CD14-positive monocyte (primary cell): ENCODE measurements at regions of chr15 and their contacts with region 1.

Region 1: DNA sequence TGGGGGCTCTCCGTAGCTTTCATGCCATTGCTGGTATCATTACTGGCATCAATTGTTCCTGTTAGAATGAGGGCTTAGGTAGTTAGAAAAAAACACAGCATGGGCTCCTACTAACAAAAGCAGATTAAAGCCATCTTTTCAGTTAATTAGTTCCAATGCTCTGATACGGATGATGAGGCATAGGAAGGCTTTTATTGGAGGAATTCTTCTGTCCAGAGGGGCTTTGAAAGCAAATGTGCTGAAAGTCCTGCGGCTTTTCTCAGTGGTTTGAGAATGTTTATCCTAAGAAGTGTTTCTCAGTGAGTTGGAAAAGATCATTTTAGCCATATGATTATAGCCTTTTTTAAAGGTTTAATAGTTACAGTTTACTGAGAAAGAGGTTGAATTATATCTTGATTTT is 198.5 kb downstream of the THSD4 start:
- DNase-seq: no peak
- H3K4me3 ChIP-seq: no peak overlapping the region
- H3K4me3 Mint-ChIP-seq: no peak overlapping the region
- H3K27ac ChIP-seq: no peak overlapping the region
- H3K27ac Mint-ChIP-seq: no peak overlapping the region
- H3K4me1 ChIP-seq: no peaks in the 10 kb centered on the region
- H3K4me1 Mint-ChIP-seq: no peaks in the 10 kb centered on the region
- H3K27me3 ChIP-seq: no peaks in the 10 kb centered on the region
- H3K27me3 Mint-ChIP-seq: peaks cover 6 to 9% (median 7%) of the 10 kb centered on the region in 3 donors
- CTCF ChIP-seq: no peak

Region 2: DNA sequence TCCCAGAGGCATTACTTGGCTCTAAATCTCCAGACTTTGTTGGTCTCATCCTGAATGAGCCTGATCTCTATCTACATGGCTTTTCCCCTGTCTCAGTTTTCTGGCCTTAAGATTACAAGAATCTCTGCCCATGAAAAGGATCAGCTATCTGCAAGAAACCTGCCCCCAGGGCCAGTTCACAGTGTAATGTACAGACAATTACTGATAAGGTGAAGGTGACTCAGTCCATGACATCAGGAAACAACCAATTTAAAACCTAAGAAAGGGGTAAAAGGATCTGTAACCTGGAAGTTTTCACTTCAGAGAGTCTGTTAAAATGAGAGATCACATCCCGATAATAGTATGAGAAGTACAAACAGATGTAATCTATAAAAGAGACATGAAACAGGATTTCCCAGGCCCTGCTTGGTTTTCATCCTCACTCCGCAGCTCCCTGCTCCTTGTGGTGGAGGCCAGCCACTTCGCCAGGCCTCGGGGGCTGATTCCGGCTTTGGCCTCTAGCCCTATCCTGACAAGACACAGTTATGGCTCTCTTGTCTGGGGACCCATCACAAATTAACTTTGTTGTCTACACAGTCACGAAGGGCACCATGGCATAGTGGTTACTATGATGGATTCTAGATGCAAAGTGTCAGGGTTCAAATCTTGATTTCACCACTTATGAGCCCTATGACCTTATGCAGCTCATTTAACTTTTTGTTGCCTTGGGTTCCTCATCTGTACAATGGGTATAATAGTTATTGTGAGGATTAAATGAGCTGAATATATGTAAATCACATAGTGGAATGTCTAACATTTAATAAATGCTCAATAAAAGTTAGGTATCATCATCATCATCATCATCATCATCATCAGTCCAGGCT is 61.5 kb before region 1 on chr15:
- intact Hi-C with region 1: loop called in 1 of 2 experiments (anchors 10 kb)
- DNase-seq: no peak
- H3K4me3 ChIP-seq: no peak overlapping the region
- H3K4me3 Mint-ChIP-seq: no peak overlapping the region
- H3K27ac ChIP-seq: no peak overlapping the region
- H3K27ac Mint-ChIP-seq: no peak overlapping the region
- H3K4me1 ChIP-seq: no peaks in the 10 kb centered on the region
- H3K4me1 Mint-ChIP-seq: no peaks in the 10 kb centered on the region
- H3K27me3 ChIP-seq: no peaks in the 10 kb centered on the region
- H3K27me3 Mint-ChIP-seq: peaks cover 3 to 6% (median 6%) of the 10 kb centered on the region in 3 donors
- CTCF ChIP-seq: no peak